GM23248 (cell line): ENCODE measurements at regions of chr16 and their contacts with region 1.

Region 1: GRCh38 chr16:13919683-13920509 is at the start of gene ERCC4:
- DNase-seq: peak; percentile 100
- H3K4me3 ChIP-seq: peak within 1 kb of the TSS; percentile 89
- H3K27ac ChIP-seq: peak within 1 kb of the TSS; percentile 29
- H3K4me1 ChIP-seq: no peaks in the 10 kb centered on the region
- H3K27me3 ChIP-seq: 0 out of 2 replicates have a peak, but pooled peaks cover 6% of the 10 kb centered on the region
- total RNA-seq, gene ERCC4: 7.5 and 14.3 TPM in 2 replicates

Region 2: GRCh38 chr16:12794486-12795387 is 1125.2 kb before region 1 on chr16:
- in situ Hi-C with region 1: no loop called
- DNase-seq: peak; percentile 24
- H3K4me3 ChIP-seq: no peak overlapping the region
- H3K27ac ChIP-seq: no peak overlapping the region
- H3K4me1 ChIP-seq: peaks cover 6% of the 10 kb centered on the region; the same call in 1 of the 2 replicates
- H3K27me3 ChIP-seq: no peaks in the 10 kb centered on the region

Region 3: DNA sequence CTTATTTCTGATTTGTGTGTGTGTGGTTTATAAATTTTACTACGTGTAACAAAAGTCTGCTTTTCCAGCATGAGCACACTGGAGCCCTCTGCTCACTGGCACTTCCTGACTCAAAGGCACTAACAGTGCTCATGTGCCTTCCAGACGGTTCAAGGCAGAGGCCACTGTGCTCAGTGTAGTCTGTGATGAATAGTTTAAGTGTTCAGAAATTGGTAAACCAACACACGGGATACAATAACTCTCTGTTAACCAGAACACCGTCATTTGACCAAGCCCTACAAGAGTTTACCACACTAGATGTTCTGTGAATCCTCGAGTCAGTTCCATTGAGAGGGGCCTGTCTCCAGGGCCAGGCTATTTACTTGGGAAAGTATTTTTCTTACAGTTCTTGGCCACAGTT is 343.1 kb after region 1 on chr16:
- in situ Hi-C with region 1: loop called (anchors 10 kb)
- DNase-seq: no peak
- H3K4me3 ChIP-seq: no peak overlapping the region
- H3K27ac ChIP-seq: no peak overlapping the region
- H3K4me1 ChIP-seq: no peaks in the 10 kb centered on the region
- H3K27me3 ChIP-seq: no peaks in the 10 kb centered on the region